ENCODE measurements at regions of chr15 and their contacts with region 1.

Region 1: DNA sequence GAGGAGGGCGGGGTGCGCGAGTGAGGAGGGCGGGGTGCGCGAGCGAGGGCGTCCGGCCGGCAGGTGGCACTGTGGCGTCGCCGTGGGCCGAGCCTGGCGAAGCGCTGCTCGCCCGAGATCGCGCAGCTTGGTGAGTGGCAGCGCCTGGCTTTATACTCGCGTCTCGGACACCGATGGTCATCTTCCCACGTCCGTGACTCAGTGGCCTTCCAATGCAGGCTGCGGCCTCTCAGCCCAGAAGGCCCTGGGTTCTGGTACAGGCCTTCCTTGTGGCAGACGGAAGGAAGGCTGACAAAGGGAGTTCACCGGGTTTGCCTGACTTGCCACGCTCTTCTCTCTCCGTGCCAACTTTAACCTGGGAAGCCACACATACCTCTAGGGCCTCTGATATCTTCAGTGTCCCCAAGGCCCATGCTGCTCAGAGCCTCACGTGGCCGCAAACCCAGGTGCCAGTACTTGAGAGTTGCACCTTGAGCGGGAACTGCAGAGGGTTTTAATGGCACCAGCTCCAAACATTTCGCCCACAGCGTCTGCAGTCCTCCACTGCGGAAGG is 195.3 kb upstream of the LYSMD4 start:
- DNase-seq: peak; percentile 73 to 93 (median 87)
- ATAC-seq: peak; percentile 33 to 95 (median 90)
- H3K4me3 ChIP-seq: peak overlapping the region; percentile 10 to 63 (median 50)
- H3K27ac ChIP-seq: peak overlapping the region in 10 of 12 donors; percentile 14 to 83 (median 72)
- H3K4me1 ChIP-seq: peaks cover 0 to 15% (median 6%) of the 10 kb centered on the region in 12 donors
- H3K27me3 ChIP-seq: no peaks in the 10 kb centered on the region
- CTCF ChIP-seq: peak; percentile 61 to 81 (median 72)
- POLR2A ChIP-seq: no peak

Region 2: DNA sequence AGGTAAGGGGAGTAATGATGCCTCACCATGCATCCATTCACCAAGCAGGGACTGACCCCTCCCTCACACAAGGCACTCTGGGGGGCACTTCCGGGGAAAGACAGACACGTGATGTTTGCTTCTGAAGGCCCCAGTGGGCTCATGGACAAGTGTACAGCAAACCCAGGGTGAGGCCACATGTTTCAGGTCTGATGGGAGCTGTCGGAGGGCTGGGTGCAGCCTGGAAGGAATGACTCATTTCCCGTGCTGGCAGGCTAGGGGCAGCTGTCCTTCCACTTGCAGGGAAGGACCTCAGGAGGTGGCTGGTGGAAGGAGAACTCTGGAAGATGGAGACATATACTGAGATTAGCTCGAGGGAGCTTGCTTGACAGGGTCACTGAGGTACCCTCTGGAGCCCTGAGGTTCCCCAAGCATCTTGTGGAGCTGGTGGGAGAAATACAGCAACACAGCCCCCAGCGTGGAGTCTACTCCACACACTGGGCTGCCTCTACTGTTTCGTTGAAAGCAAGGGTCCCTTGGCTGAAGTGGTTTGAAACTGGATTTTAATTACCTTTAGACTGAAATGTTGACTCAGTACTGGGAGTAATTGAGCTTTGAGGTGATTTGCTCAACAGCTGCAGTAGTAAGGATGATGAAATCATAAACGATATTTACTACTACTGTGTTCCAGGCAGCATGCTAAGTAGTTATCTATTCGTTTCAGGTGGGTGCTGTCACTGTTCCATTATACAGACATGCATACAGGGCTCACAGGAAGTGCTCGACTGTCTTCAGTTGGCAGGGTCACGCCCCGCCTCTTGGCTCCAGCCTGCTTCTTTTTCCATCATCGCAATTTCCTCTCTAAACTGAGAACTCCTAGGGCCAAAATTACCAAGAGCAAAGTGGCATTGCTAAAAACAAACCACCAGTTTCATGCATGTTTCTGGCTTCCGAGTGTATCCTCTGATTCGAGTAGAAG is 182.9 kb after region 1 on chr15:
- intact Hi-C with region 1: loop called in 1 of 10 experiments (anchors 5 kb)
- DNase-seq: peak; percentile 73 to 90 (median 78)
- ATAC-seq: peak; percentile 25 to 80 (median 73)
- H3K4me3 ChIP-seq: no peak overlapping the region
- H3K27ac ChIP-seq: peak overlapping the region; percentile 64 to 100 (median 93)
- H3K4me1 ChIP-seq: peaks cover 12 to 68% (median 57%) of the 10 kb centered on the region in 12 donors
- H3K27me3 ChIP-seq: no peaks in the 10 kb centered on the region
- CTCF ChIP-seq: peak in 1 of 12 donors; percentile 11
- POLR2A ChIP-seq: no peak

Region 3: GRCh38 chr15:100131321-100132224 is 203.1 kb after region 1 on chr15:
- intact Hi-C with region 1: loop called in 3 of 10 experiments (anchors 2 kb)
- DNase-seq: peak; percentile 71 to 81 (median 77)
- ATAC-seq: peak in 3 of 4 donors; percentile 91 to 94 (median 92)
- H3K4me3 ChIP-seq: peak overlapping the region in 9 of 12 donors; percentile 20 to 52 (median 39)
- H3K27ac ChIP-seq: peak overlapping the region in 8 of 12 donors; percentile 3 to 64 (median 44)
- H3K4me1 ChIP-seq: peaks cover 0 to 13% (median 0%) of the 10 kb centered on the region in 12 donors
- H3K27me3 ChIP-seq: no peaks in the 10 kb centered on the region
- CTCF ChIP-seq: peak; percentile 39 to 80 (median 57)
- POLR2A ChIP-seq: no peak

Region 4: GRCh38 chr15:100341662-100342560 is 413.4 kb after region 1 on chr15 and contains the start of gene ADAMTS17:
- intact Hi-C with region 1: loop called in 9 of 10 experiments (anchors 2 to 5 kb)
- DNase-seq: peak; percentile 94 to 97 (median 95)
- ATAC-seq: peak; percentile 99 to 100 (median 99)
- H3K4me3 ChIP-seq: peak within 1 kb of the TSS; percentile 61 to 95 (median 74)
- H3K27ac ChIP-seq: peak within 1 kb of the TSS in 8 of 12 donors; percentile 16 to 80 (median 45)
- H3K4me1 ChIP-seq: peaks cover 0 to 11% (median 6%) of the 10 kb centered on the region in 12 donors
- H3K27me3 ChIP-seq: peaks cover 0 to 28% (median 11%) of the 10 kb centered on the region in 9 donors
- CTCF ChIP-seq: peak; percentile 87 to 99 (median 94)
- POLR2A ChIP-seq: peak; percentile 77 to 95
- total RNA-seq, gene ADAMTS17: 0.52 to 2.4 (median 1.9) TPM

Region 5: GRCh38 chr15:100565591-100565990 is 637.1 kb after region 1 on chr15:
- intact Hi-C with region 1: loop called in 2 of 10 experiments (anchors 5 to 10 kb)
- DNase-seq: no peak
- ATAC-seq: no peak
- H3K4me3 ChIP-seq: no peak overlapping the region
- H3K27ac ChIP-seq: no peak overlapping the region
- H3K4me1 ChIP-seq: no peaks in the 10 kb centered on the region
- H3K27me3 ChIP-seq: no peaks in the 10 kb centered on the region
- CTCF ChIP-seq: no peak
- POLR2A ChIP-seq: no peak

Region 6: GRCh38 chr15:100572362-100572983 is 644.0 kb after region 1 on chr15:
- intact Hi-C with region 1: loop called in 2 of 10 experiments (anchors 5 to 10 kb)
- DNase-seq: no peak
- ATAC-seq: no peak
- H3K4me3 ChIP-seq: no peak overlapping the region
- H3K27ac ChIP-seq: no peak overlapping the region
- H3K4me1 ChIP-seq: no peaks in the 10 kb centered on the region
- H3K27me3 ChIP-seq: no peaks in the 10 kb centered on the region
- CTCF ChIP-seq: peak; percentile 43 to 75 (median 62)
- POLR2A ChIP-seq: no peak

Region 7: GRCh38 chr15:100596792-100597191 is 668.3 kb after region 1 on chr15:
- intact Hi-C with region 1: loop called in 1 of 10 experiments (anchors 10 kb)
- DNase-seq: peak in 2 of 5 donors; percentile 24 to 56
- ATAC-seq: no peak
- H3K4me3 ChIP-seq: peak overlapping the region in 1 of 12 donors; percentile 39
- H3K27ac ChIP-seq: peak overlapping the region in 1 of 12 donors; percentile 80
- H3K4me1 ChIP-seq: peaks cover 4 to 52% (median 15%) of the 10 kb centered on the region in 12 donors
- H3K27me3 ChIP-seq: no peaks in the 10 kb centered on the region
- CTCF ChIP-seq: no peak
- POLR2A ChIP-seq: no peak